ENCODE measurements at regions of chr1 and their contacts with region 1.

Region 1: DNA sequence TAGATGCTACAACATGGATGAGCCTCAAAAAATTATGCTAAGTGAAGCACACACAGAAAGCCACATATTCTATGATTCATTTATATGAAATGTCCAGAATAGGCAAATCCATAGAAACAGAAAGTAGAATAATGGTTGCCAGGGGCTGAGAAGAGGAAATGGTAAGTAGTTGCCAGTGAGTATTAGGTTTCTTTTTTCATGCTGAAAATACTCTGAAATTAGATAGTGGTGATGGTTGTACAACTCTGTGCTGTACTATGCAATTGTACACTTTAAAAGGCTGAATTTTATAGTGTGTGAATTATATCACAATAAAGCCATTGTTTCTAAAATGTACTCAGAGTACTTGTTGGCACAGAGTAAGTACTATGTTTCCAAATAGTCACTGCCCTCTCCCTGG is 15.5 kb upstream of the GFI1 start:
- DNase-seq: no peak
- ATAC-seq: no peak
- H3K4me3 Mint-ChIP-seq: no peak overlapping the region
- H3K27ac Mint-ChIP-seq: no peak overlapping the region
- H3K4me1 Mint-ChIP-seq: no peaks in the 10 kb centered on the region
- H3K27me3 Mint-ChIP-seq: peaks cover 4% of the 10 kb centered on the region; the same call in 1 of the 2 replicates
- CTCF ChIP-seq: no peak

Region 2: DNA sequence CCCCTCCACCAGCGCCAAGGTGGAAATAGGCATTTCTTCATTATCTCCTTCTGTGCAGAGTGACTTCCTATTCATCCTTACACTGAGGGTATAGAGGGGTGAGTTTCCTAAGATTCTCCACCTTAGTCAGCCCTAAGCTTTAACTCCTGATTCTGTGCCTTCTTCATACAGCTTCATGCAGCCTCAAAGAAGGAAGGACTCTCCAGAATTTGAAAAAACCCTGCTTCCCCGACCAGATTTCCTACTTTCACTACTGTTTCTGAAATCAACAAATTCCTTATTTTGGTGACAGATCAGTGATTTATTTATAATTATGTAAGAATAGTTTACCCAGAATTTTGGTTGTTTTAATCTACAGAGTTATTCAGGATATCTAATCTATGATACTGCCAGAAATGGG is 44.1 kb before region 1 on chr1:
- CTCF ChIA-PET with region 1: no interaction called
- POLR2A ChIA-PET with region 1: no interaction called
- DNase-seq: no peak
- ATAC-seq: no peak
- H3K4me3 Mint-ChIP-seq: no peak overlapping the region
- H3K27ac Mint-ChIP-seq: no peak overlapping the region
- H3K4me1 Mint-ChIP-seq: no peaks in the 10 kb centered on the region
- H3K27me3 Mint-ChIP-seq: no peaks in the 10 kb centered on the region
- CTCF ChIP-seq: no peak

Region 3: GRCh38 chr1:92778376-92778775 is 276.1 kb after region 1 on chr1:
- CTCF ChIA-PET with region 1: no interaction called
- POLR2A ChIA-PET with region 1: interaction called, 10 read pairs
- DNase-seq: no peak
- ATAC-seq: no peak
- H3K4me3 Mint-ChIP-seq: no peak overlapping the region
- H3K27ac Mint-ChIP-seq: no peak overlapping the region
- H3K4me1 Mint-ChIP-seq: peaks cover 9% of the 10 kb centered on the region
- H3K27me3 Mint-ChIP-seq: no peaks in the 10 kb centered on the region
- CTCF ChIP-seq: no peak